ENCODE measurements at regions of chr15 and their contacts with region 1.

Region 1: GRCh38 chr15:34501131-34501530 is 63.5 kb upstream of the GOLGA8A start:
- DNase-seq: no peak
- ATAC-seq: no peak
- H3K4me3 ChIP-seq: no peak overlapping the region
- H3K4me3 Mint-ChIP-seq: no peak overlapping the region
- H3K27ac ChIP-seq: no peak overlapping the region
- H3K27ac Mint-ChIP-seq: no peak overlapping the region
- H3K4me1 ChIP-seq: no peaks in the 10 kb centered on the region
- H3K4me1 Mint-ChIP-seq: no peaks in the 10 kb centered on the region
- H3K27me3 ChIP-seq: peaks cover 0 to 40% of the 10 kb centered on the region in 2 experiments
- H3K27me3 Mint-ChIP-seq: peaks cover 56% of the 10 kb centered on the region
- CTCF ChIP-seq: no peak

Region 2: GRCh38 chr15:34603134-34603533 is 102.0 kb after region 1 on chr15:
- CTCF ChIA-PET with region 1: no interaction called
- POLR2A ChIA-PET with region 1: no interaction called
- intact Hi-C with region 1: loop called in 1 of 2 experiments (anchors 5 kb)
- DNase-seq: no peak
- ATAC-seq: no peak
- H3K4me3 ChIP-seq: no peak overlapping the region
- H3K4me3 Mint-ChIP-seq: no peak overlapping the region
- H3K27ac ChIP-seq: no peak overlapping the region
- H3K27ac Mint-ChIP-seq: no peak overlapping the region
- H3K4me1 ChIP-seq: no peaks in the 10 kb centered on the region
- H3K4me1 Mint-ChIP-seq: no peaks in the 10 kb centered on the region
- H3K27me3 ChIP-seq: peaks cover 0 to 19% of the 10 kb centered on the region in 2 experiments
- H3K27me3 Mint-ChIP-seq: peaks cover 63% of the 10 kb centered on the region
- CTCF ChIP-seq: no peak

Measured in CD4-positive, alpha-beta T cell (primary cell).